HCT116 (cell line): ENCODE measurements at regions of chr10 and their contacts with region 1.

Region 1: DNA sequence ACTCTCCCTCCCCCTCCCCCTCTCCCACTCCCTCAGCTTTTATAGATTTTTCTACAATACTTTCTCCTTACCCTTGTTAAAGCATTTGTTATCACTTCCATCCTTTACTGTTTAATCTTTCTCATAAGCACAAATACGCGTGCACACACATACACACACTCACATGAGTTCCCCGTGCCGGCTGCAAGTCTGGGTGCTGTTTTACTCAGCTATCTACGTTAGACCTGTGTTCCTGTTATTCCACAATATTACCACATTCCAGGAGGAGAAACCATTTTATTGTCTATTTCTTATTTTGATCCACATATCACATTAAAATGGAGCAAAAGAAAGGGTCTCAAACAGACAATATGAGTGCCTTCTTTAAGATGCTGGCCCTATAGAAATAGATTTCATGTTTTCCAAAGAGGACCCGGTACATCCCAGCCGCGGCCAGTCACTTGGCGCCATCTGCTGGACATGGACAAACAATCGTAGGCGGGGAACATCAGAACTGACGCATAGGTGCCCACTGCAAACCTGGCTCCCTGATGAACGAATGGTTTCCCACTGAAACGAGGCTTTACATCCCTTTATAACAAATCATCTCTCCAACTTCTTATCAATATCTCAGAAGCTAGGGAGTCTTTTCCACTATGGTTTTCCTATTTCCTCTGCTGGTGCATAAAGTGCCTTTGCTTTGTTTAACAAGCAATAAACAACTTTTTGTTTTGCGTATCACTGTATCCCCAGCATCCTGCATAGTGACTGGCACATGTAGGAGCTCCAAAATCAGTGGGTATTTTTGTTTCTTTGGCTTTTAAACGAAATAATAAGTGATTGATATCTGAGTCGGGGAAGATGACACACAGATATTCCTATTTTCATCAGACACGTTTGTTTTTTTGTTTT is 25.2 kb upstream of the OPTN start:
- DNase-seq: peak; percentile 53
- ATAC-seq: peak; percentile 100
- H3K4me3 ChIP-seq: no peak overlapping the region
- H3K27ac ChIP-seq: no peak overlapping the region
- H3K4me1 ChIP-seq: 0 out of 4 replicates have a peak, but pooled peaks cover 0 to 4% of the 10 kb centered on the region in 2 experiments
- H3K27me3 ChIP-seq: no peaks in the 10 kb centered on the region
- CTCF ChIP-seq: peak; percentile 76 to 89 (median 82)
- POLR2A ChIP-seq: no peak
- RAD21 ChIP-seq: peak; percentile 93

Region 2: DNA sequence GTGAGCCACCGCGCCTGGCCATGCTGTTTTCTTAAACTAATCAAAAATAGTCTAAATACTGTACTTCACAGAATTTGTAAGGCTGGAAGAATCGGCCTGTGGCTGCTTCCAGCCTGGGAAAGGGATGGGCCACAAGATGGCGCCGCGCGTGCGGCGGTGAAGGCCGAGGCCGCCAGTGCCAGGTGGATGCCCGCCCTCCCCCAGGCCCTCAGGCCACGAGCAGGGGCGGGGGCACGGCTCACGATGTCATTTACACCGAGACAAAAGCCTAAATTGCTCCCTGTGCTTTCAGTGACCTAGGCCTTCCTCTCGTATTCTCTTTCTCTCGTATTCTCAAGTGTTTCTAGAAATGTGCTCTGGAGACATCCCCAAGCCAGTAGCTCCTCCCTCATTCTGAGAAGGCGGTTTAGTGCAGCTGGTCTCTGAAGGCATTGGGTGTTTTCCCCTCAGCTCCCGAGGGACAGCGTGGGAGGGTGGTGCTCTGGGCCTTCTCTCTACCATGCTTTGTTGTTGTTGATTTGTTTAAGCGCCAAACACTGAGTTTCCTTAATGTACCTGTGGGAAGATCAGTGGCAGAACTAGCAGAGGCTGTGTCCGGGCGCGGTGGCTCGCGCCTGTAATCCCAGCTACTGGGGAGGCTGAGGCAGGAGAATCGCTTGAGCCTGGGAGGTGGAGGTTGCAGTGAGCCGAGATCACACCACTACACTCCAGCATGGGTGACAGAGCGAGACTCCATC is 810.4 kb before region 1 on chr10:
- CTCF ChIA-PET with region 1: interaction called, 11 read pairs
- POLR2A ChIA-PET with region 1: no interaction called
- RAD21 ChIA-PET with region 1: no interaction called
- intact Hi-C with region 1: loop called (anchors 10 kb)
- DNase-seq: peak; percentile 60
- ATAC-seq: peak; percentile 97
- H3K4me3 ChIP-seq: peak overlapping the region in 1 of 2 experiments; percentile 33; a peak in 2 of 4 replicates
- H3K27ac ChIP-seq: no peak overlapping the region; the same call in 1 of the 2 replicates
- H3K4me1 ChIP-seq: peaks cover 8 to 17% of the 10 kb centered on the region in 2 experiments; a peak in 3 of 4 replicates
- H3K27me3 ChIP-seq: no peaks in the 10 kb centered on the region
- CTCF ChIP-seq: peak; percentile 69 to 87 (median 69)
- POLR2A ChIP-seq: no peak
- RAD21 ChIP-seq: peak; percentile 98

Region 3: DNA sequence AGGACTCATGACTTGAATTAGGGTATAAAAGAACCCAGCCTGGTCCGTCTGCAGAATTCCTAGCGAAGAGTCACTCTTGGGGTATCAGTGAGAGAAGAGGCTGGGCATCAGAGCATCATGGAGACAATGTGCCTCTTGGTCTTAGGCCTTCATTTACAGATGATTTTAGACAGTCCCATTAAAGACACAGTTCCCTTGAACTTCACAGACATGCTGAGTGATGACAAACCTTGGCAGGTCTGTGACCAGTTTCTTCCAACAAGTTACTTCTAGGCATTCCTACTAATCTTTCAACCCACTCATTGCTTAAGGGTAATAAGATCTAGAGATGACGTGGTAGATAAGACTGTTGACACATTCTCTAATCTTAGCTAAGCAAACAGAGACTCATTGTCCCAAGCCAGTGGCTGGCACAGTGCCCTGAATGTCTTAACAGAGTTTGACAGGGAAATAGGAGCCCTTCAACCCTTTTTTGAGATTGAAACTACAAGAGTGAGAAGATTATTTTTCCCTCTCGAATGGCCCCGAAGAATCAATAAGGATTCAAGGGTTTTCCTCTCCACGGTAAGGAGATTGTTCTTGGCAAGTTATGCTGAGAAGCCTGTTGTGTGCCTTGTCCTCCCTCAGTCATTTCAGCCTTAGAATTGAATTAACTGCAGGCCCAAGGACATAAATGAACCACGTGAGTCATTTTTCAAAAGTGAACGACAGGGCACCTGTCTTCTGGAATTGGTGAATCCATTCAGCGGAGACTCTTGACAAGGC is 354.4 kb before region 1 on chr10:
- CTCF ChIA-PET with region 1: interaction called, 5 read pairs
- POLR2A ChIA-PET with region 1: no interaction called
- RAD21 ChIA-PET with region 1: interaction called in 1 of 2 experiments, 5 read pairs
- intact Hi-C with region 1: loop called (anchors 1 kb)
- DNase-seq: peak; percentile 96
- ATAC-seq: peak; percentile 94
- H3K4me3 ChIP-seq: 0 out of 4 replicates have a peak overlapping the region, but pooled peaks of 1 of the 2 experiments have one; percentile 2
- H3K27ac ChIP-seq: peak overlapping the region; percentile 54; the same call in 1 of the 2 replicates
- H3K4me1 ChIP-seq: peaks cover 24 to 27% of the 10 kb centered on the region in 2 experiments
- H3K27me3 ChIP-seq: peaks cover 11% of the 10 kb centered on the region; the same call in 1 of the 2 replicates
- CTCF ChIP-seq: no peak
- POLR2A ChIP-seq: no peak
- RAD21 ChIP-seq: peak; percentile 22; the same call in 1 of the 2 replicates

Region 4: GRCh38 chr10:12782537-12782936 is 292.3 kb before region 1 on chr10:
- CTCF ChIA-PET with region 1: interaction called, 21 read pairs
- POLR2A ChIA-PET with region 1: no interaction called
- RAD21 ChIA-PET with region 1: no interaction called
- intact Hi-C with region 1: no loop called
- DNase-seq: peak; percentile 42
- ATAC-seq: peak; percentile 91
- H3K4me3 ChIP-seq: peak overlapping the region; percentile 20 to 27; a peak in 2 of 4 replicates
- H3K27ac ChIP-seq: no peak overlapping the region
- H3K4me1 ChIP-seq: peaks cover 2 to 9% of the 10 kb centered on the region in 2 experiments; a peak in 3 of 4 replicates
- H3K27me3 ChIP-seq: no peaks in the 10 kb centered on the region
- CTCF ChIP-seq: peak; percentile 50 to 94 (median 92); a peak in 5 of 6 replicates
- POLR2A ChIP-seq: no peak
- RAD21 ChIP-seq: peak; percentile 66